Activated CD8-positive, alpha-beta T cell treated with anti-CD3 and anti-CD28 coated beads for 36 hours (primary cell): ENCODE measurements at regions of chr3 and their contacts with region 1.

Region 1: DNA sequence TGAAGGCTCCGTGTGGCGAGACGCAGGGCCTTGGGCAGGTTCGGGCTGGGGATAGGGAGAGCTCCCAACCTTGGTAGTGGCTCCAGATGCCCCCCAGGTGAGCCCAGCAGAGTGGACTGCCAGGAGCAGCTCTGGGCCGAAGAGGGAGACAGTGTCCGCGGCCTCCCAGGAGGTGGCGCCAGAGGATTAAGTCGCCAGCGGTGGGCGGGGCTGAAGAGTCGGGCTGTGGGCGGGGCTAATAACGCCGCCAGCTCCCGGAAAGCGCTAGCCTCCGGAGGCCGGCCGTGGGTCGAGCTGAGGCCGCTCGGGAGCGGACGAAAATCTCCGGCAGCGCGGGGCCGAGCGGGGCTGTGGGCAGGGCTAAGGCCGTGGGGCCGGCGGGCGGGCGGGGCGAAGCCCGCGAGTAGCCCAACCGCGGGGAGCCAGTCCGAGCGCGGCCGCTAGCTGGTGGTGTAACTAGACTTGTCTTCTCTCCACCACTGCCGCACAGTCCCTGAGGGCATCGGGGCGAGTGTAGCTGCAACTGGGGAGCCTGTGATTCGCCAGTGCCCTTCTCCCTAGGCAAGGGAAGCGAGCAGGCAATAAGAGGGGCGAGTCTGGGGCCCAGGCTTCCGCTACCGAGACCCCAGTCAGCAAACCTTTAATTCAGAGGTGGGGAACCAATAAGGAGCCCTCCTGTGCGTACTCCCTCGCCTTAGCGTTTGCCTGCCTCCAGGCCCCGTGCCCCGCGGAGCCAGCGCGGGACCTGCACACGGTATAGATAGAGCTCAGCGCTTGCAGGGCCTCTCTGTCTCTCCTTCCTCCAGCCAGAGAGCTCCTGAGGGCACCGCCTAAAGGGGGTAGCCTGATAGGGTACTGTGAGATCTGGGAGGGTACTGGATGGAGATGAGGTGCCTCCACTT is 14.4 kb upstream of the BSN start:
- DNase-seq: peak; percentile 93
- ATAC-seq: peak; percentile 97
- H3K4me3 Mint-ChIP-seq: peak overlapping the region; percentile 67
- H3K27ac Mint-ChIP-seq: peak overlapping the region; percentile 55
- H3K4me1 Mint-ChIP-seq: peaks cover 5% of the 10 kb centered on the region
- H3K27me3 Mint-ChIP-seq: peaks cover 5% of the 10 kb centered on the region
- CTCF ChIP-seq: peak; percentile 78

Region 2: DNA sequence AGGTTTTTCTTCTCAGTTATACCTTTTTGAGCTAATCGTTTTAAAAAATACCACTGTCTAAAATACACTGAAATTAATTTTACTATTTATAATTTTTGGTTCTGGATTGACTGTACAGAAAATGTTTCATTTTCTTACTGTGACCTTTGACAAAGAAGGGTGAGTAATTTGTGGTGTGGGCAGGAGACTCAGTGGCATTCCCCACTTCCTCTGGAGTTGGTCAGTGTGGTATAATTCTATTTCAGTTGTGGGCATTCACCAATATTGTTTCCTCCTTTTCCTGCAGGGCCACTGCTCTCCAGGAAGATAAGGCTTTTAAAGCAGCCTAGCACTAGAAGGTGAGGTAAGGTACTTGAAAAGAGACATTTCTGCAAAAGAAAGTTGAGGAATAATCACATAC is 63.3 kb before region 1 on chr3:
- CTCF ChIA-PET with region 1: interaction called, 11 read pairs
- POLR2A ChIA-PET with region 1: interaction called, 3 read pairs
- intact Hi-C with region 1: no loop called
- DNase-seq: peak; percentile 64
- ATAC-seq: peak; percentile 81
- H3K4me3 Mint-ChIP-seq: no peak overlapping the region
- H3K27ac Mint-ChIP-seq: peak overlapping the region; percentile 38
- H3K4me1 Mint-ChIP-seq: peaks cover 21% of the 10 kb centered on the region
- H3K27me3 Mint-ChIP-seq: no peaks in the 10 kb centered on the region
- CTCF ChIP-seq: no peak

Region 3: GRCh38 chr3:49553692-49554632 is 14.1 kb after region 1 on chr3 and contains the start of gene BSN:
- CTCF ChIA-PET with region 1: interaction called, 57 read pairs
- POLR2A ChIA-PET with region 1: interaction called, 12 read pairs
- intact Hi-C with region 1: no loop called
- DNase-seq: peak; percentile 93
- ATAC-seq: peak; percentile 93
- H3K4me3 Mint-ChIP-seq: peak within 1 kb of the TSS; percentile 90
- H3K27ac Mint-ChIP-seq: peak within 1 kb of the TSS; percentile 78
- H3K4me1 Mint-ChIP-seq: peaks cover 12% of the 10 kb centered on the region
- H3K27me3 Mint-ChIP-seq: peaks cover 18% of the 10 kb centered on the region
- CTCF ChIP-seq: no peak
- total RNA-seq, gene BSN: 0.09 TPM

Region 4: GRCh38 chr3:49602877-49603411 is 63.0 kb after region 1 on chr3:
- CTCF ChIA-PET with region 1: interaction called, 26 read pairs
- POLR2A ChIA-PET with region 1: interaction called, 3 read pairs
- intact Hi-C with region 1: no loop called
- DNase-seq: peak; percentile 79
- ATAC-seq: peak; percentile 95
- H3K4me3 Mint-ChIP-seq: no peak overlapping the region
- H3K27ac Mint-ChIP-seq: peak overlapping the region; percentile 79
- H3K4me1 Mint-ChIP-seq: peaks cover 18% of the 10 kb centered on the region
- H3K27me3 Mint-ChIP-seq: no peaks in the 10 kb centered on the region
- CTCF ChIP-seq: no peak

Region 5: DNA sequence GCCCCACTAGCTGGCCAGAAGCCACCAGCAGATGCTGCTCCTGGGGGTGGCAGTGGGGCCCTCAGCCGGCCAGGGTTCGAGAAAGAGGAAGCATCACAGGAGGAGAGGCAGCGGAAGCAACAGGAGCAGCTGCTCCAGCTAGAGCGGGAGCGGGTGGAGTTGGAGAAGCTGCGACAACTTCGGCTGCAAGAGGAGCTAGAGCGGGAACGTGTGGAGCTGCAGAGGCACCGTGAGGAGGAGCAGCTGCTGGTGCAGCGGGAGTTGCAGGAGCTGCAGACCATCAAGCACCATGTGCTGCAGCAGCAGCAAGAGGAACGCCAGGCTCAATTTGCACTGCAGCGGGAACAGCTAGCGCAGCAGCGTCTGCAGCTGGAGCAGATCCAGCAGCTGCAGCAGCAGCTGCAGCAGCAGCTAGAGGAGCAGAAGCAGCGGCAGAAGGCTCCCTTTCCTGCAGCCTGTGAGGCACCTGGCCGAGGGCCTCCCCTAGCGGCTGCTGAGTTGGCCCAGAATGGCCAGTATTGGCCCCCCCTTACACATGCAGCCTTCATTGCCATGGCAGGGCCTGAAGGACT is 116.7 kb after region 1 on chr3:
- CTCF ChIA-PET with region 1: interaction called, 43 read pairs
- POLR2A ChIA-PET with region 1: no interaction called
- intact Hi-C with region 1: no loop called
- DNase-seq: peak; percentile 12
- ATAC-seq: no peak
- H3K4me3 Mint-ChIP-seq: no peak overlapping the region
- H3K27ac Mint-ChIP-seq: no peak overlapping the region
- H3K4me1 Mint-ChIP-seq: no peaks in the 10 kb centered on the region
- H3K27me3 Mint-ChIP-seq: no peaks in the 10 kb centered on the region
- CTCF ChIP-seq: no peak

Region 6: GRCh38 chr3:49673715-49674496 is 134.0 kb after region 1 on chr3 and contains the start of gene APEH:
- CTCF ChIA-PET with region 1: interaction called, 185 read pairs
- POLR2A ChIA-PET with region 1: interaction called, 37 read pairs
- intact Hi-C with region 1: loop called (anchors 1 kb)
- DNase-seq: peak; percentile 99
- ATAC-seq: peak; percentile 88
- H3K4me3 Mint-ChIP-seq: peak within 1 kb of the TSS; percentile 95
- H3K27ac Mint-ChIP-seq: peak within 1 kb of the TSS; percentile 98
- H3K4me1 Mint-ChIP-seq: peaks cover 36% of the 10 kb centered on the region
- H3K27me3 Mint-ChIP-seq: no peaks in the 10 kb centered on the region
- CTCF ChIP-seq: no peak
- total RNA-seq, gene APEH: 165 to 166 TPM

Region 7: GRCh38 chr3:49839193-49839809 is 299.4 kb after region 1 on chr3:
- CTCF ChIA-PET with region 1: interaction called, 10 read pairs
- POLR2A ChIA-PET with region 1: no interaction called
- intact Hi-C with region 1: no loop called
- DNase-seq: peak; percentile 90
- ATAC-seq: peak; percentile 93
- H3K4me3 Mint-ChIP-seq: no peak overlapping the region
- H3K27ac Mint-ChIP-seq: no peak overlapping the region
- H3K4me1 Mint-ChIP-seq: peaks cover 1% of the 10 kb centered on the region
- H3K27me3 Mint-ChIP-seq: no peaks in the 10 kb centered on the region
- CTCF ChIP-seq: peak; percentile 78

Region 8: GRCh38 chr3:50235716-50236496 is 696.0 kb after region 1 on chr3 and contains the start of gene GNAI2:
- CTCF ChIA-PET with region 1: no interaction called
- POLR2A ChIA-PET with region 1: no interaction called
- intact Hi-C with region 1: no loop called
- DNase-seq: peak; percentile 99
- ATAC-seq: peak; percentile 91
- H3K4me3 Mint-ChIP-seq: peak within 1 kb of the TSS; percentile 91
- H3K27ac Mint-ChIP-seq: peak within 1 kb of the TSS; percentile 95
- H3K4me1 Mint-ChIP-seq: peaks cover 31% of the 10 kb centered on the region
- H3K27me3 Mint-ChIP-seq: no peaks in the 10 kb centered on the region
- CTCF ChIP-seq: no peak
- total RNA-seq, gene GNAI2: 238 to 242 TPM